Heart right ventricle (tissue), 16 donors: ENCODE measurements at regions of chr6 and their contacts with region 1.

Region 1: DNA sequence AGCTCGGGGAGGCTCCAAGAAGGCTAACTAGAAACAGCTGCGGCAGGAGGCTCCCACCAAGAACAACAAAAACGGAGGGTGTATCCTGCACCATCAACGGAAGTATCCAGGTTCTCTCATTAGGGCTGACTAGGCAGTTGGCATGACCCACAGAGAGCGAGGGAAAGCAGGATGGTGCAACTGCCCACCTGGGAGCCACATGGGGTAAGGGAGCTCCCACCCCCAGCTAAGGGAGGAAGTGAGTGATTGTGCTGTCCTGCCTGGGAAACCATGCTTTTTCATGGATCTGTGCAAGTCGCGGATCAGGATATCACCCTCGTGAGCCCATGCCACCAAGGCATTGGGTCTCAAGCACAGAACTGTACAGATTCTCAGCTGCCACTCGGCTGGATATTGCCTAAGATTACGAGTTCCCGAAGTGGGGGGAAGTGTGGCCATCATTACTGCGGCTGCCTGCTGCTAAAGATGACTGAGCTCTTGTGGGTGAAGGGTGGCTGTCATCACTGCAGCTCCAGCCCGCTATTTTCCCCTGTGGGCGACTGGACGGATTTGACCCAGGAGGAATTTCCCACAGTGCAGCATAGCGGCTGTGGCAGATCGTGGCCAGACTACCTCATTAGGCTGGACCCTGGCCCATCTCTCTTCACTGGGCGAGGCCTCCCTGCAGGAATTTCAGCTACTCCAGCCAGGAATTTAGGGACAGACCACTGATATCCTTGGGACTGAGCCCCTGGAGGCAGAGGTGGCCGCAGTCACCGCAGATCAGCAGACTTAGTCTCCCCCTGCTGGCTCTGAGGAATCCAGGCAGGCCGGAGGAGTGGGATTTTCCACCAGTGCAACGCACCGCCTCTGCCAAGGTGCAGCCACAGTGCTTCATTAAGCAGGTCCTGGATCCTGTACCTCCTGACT is 515.7 kb downstream of the FRK start:
- DNase-seq: peak; percentile 3 to 16
- ATAC-seq: peak; percentile 29 to 94 (median 78)
- H3K4me3 ChIP-seq: no peak overlapping the region
- H3K27ac ChIP-seq: no peak overlapping the region
- H3K4me1 ChIP-seq: no peaks in the 10 kb centered on the region
- H3K27me3 ChIP-seq: no peaks in the 10 kb centered on the region
- CTCF ChIP-seq: peak in 6 of 9 donors; percentile 13 to 43 (median 32)

Region 2: GRCh38 chr6:114747987-114748630 is 796.9 kb before region 1 on chr6:
- intact Hi-C with region 1: loop called in 1 of 10 experiments (anchors 5 kb)
- DNase-seq: peak in 1 of 2 donors; percentile 28
- ATAC-seq: no peak
- H3K4me3 ChIP-seq: no peak overlapping the region
- H3K27ac ChIP-seq: no peak overlapping the region
- H3K4me1 ChIP-seq: no peaks in the 10 kb centered on the region
- H3K27me3 ChIP-seq: no peaks in the 10 kb centered on the region
- CTCF ChIP-seq: peak; percentile 33 to 74 (median 62)

Region 3: DNA sequence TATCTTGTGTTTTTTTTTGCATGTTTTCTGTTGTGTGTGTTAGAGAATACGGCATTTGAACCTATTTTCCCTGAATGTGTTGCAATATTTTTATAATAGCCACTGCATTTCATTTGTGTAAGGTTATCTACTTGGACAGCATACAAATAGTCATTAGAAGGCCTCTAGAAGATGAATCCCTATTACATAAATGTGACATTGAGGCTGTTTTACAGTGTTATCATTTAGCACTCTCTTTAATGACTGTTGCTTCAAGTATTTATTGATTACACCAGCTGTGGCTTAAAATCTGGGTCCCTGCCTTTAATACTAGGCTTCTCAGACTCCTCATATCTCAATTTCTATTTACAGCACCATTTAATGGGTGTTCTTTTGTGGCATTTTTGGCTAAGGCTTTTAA is 49.9 kb after region 1 on chr6:
- intact Hi-C with region 1: loop called in 1 of 10 experiments (anchors 1 kb)
- DNase-seq: no peak
- ATAC-seq: no peak
- H3K4me3 ChIP-seq: no peak overlapping the region
- H3K27ac ChIP-seq: no peak overlapping the region
- H3K4me1 ChIP-seq: peaks cover 0 to 6% (median 0%) of the 10 kb centered on the region in 9 donors
- H3K27me3 ChIP-seq: no peaks in the 10 kb centered on the region
- CTCF ChIP-seq: no peak